ENCODE measurements at regions of chr20 and their contacts with region 1.

Region 1: GRCh38 chr20:51650685-51651134 is 108.2 kb upstream of the NFATC2 start:
- DNase-seq: no peak
- H3K4me3 Mint-ChIP-seq: no peak overlapping the region
- H3K27ac Mint-ChIP-seq: no peak overlapping the region
- H3K4me1 Mint-ChIP-seq: no peaks in the 10 kb centered on the region
- H3K27me3 Mint-ChIP-seq: peaks cover 2% of the 10 kb centered on the region

Region 2: DNA sequence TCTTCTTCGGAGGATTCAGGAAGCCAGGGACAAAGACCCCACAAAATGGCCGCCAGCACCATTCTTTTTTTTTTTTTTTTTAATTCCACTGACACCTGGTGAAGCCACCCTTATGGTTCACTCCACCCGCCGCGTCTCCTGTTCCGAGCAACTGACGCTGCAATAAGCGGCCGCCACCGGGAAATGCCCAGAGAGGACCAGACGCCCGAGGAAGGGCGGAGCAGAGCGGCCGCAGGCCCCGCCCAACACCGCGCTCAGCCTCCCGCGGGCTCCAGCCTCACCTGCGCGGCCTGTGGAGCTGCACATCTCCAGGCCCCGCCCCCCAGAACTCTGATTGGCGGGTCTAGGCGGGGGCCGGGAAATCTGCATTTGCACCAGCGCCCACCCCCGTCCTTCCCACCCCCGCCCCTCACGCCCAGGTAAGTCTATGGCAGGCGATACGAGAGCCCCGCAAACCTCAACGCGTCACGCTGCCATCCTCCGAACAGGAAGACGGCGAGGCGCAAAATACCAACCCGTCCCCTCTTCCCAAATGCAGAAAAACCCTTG is 116.4 kb after region 1 on chr20:
- CTCF ChIA-PET with region 1: no interaction called
- POLR2A ChIA-PET with region 1: no interaction called
- intact Hi-C with region 1: loop called (anchors 10 kb)
- DNase-seq: peak; percentile 73
- H3K4me3 Mint-ChIP-seq: peak overlapping the region; percentile 48
- H3K27ac Mint-ChIP-seq: no peak overlapping the region
- H3K4me1 Mint-ChIP-seq: peaks cover 7% of the 10 kb centered on the region
- H3K27me3 Mint-ChIP-seq: peaks cover 28% of the 10 kb centered on the region

Region 3: GRCh38 chr20:51984931-51985415 is 334.3 kb after region 1 on chr20:
- CTCF ChIA-PET with region 1: no interaction called
- POLR2A ChIA-PET with region 1: no interaction called
- intact Hi-C with region 1: no loop called
- DNase-seq: no peak
- H3K4me3 Mint-ChIP-seq: no peak overlapping the region
- H3K27ac Mint-ChIP-seq: no peak overlapping the region
- H3K4me1 Mint-ChIP-seq: no peaks in the 10 kb centered on the region
- H3K27me3 Mint-ChIP-seq: no peaks in the 10 kb centered on the region

Measured in activated CD4-positive, alpha-beta memory T cell treated with anti-CD3 and anti-CD28 coated beads for 36 hours (primary cell).